WTC11 (cell line): ENCODE measurements at regions of chr11 and their contacts with region 1.

Region 1: DNA sequence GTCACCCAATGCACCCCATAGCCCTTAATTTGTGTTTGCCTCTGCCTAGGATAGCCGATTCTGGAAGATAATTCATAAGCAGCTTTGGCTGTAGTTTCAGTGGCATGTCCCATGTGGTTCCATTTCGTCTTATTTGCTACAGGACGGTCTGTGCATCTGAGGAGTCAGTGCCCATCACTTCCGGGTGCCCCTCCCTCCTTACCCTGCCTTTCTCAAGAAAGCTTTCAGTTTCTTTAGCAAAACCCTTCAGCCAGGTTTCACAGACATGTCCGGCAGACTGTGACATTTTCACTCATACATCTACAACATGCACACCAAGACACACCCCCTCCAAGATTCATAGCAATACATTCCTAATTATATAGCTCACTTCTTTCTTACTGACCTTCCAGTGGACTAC is 14.3 kb downstream of the TP53AIP1 start:
- DNase-seq: no peak
- ATAC-seq: no peak
- H3K4me3 Mint-ChIP-seq: no peak overlapping the region
- H3K27ac Mint-ChIP-seq: no peak overlapping the region
- H3K4me1 Mint-ChIP-seq: peaks cover 57% of the 10 kb centered on the region
- H3K27me3 Mint-ChIP-seq: peaks cover 94% of the 10 kb centered on the region
- CTCF ChIP-seq: no peak

Region 2: DNA sequence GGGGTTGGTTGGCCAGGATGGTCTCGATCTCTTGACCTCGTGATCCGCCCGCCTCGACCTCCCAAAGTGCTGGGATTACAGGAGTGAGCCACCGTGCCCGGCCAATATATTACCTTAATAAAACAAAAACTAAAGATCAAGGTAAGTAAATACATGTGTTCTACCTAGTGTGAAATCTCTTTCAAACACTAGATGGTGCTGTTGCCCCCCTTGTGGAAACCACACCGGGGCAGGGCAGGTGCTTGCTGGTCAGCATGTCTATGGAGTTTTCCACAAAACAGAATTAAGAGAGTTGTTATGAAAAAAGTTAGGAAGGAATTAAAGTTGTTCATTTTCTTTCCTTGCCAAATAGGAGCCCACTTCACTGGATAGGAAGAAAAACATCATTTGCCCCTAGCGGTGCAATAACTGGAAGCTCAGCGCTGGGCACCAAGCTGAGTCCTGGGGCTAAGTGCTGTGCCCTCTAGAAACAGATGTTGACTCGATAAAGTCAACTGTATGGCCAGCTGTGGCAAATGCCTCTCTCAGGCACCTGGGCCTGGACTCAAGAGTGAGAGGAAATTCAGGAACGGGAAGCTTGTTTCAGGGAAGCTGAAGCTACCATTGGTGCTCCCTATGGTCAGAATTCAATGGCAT is 43.6 kb before region 1 on chr11:
- CTCF ChIA-PET with region 1: interaction called, 13 read pairs
- POLR2A ChIA-PET with region 1: interaction called, 3 read pairs
- DNase-seq: peak; percentile 67
- ATAC-seq: peak; percentile 62
- H3K4me3 Mint-ChIP-seq: no peak overlapping the region
- H3K27ac Mint-ChIP-seq: no peak overlapping the region
- H3K4me1 Mint-ChIP-seq: peaks cover 32% of the 10 kb centered on the region
- H3K27me3 Mint-ChIP-seq: peaks cover 75% of the 10 kb centered on the region
- CTCF ChIP-seq: peak; percentile 78

Region 3: DNA sequence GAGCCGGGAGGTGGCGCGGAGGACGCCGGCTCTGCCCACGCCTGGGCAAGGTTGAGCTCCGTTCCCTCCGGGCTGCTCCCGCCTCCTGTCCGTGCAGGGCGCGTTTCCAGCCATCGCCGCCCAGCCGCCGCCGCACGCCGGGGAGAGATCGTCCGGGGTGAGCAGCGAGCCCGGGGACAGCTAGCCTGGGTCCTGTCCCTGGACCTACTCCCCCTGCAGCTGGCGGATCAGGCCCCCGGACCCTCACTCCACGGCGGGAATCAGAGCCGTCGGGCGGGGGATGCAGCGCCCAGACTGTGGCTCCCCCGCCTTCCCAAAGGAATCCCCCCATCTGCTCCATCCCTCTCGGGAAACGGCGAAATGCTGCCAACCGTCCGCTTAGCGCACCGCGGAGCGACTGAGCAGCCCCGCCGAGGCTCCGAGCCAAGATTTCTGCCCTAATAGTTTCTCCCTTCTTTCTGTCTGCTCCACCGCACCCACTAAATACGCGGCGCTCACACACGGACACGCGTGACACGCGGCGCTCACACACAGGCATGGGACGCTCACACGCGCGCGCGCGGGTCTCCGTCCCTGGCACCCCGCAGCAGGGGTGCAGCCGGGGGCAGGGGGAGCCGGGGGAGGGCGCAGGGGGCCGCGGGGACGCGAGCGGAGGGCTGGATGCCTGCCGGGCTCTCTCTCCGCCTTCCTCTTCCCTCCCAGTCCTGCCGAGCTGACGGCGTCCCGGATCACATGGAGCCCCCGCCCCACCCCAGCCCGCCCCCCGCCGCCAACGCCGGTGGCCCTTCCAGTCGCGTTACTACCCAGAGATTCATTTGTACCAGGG is 37.6 kb before region 1 on chr11 and contains the start of gene KCNJ5:
- CTCF ChIA-PET with region 1: interaction called, 13 read pairs
- POLR2A ChIA-PET with region 1: no interaction called
- DNase-seq: peak; percentile 56
- ATAC-seq: peak; percentile 41
- H3K4me3 Mint-ChIP-seq: peak within 1 kb of the TSS; percentile 77
- H3K27ac Mint-ChIP-seq: no peak within 1 kb of the TSS
- H3K4me1 Mint-ChIP-seq: peaks cover 42% of the 10 kb centered on the region
- H3K27me3 Mint-ChIP-seq: peaks cover 95% of the 10 kb centered on the region
- CTCF ChIP-seq: no peak
- total RNA-seq, gene KCNJ5: 0.09 to 0.23 TPM (median 0.22 TPM) in 3 replicates